ENCODE measurements at regions of chr6 and their contacts with region 1.

Region 1: DNA sequence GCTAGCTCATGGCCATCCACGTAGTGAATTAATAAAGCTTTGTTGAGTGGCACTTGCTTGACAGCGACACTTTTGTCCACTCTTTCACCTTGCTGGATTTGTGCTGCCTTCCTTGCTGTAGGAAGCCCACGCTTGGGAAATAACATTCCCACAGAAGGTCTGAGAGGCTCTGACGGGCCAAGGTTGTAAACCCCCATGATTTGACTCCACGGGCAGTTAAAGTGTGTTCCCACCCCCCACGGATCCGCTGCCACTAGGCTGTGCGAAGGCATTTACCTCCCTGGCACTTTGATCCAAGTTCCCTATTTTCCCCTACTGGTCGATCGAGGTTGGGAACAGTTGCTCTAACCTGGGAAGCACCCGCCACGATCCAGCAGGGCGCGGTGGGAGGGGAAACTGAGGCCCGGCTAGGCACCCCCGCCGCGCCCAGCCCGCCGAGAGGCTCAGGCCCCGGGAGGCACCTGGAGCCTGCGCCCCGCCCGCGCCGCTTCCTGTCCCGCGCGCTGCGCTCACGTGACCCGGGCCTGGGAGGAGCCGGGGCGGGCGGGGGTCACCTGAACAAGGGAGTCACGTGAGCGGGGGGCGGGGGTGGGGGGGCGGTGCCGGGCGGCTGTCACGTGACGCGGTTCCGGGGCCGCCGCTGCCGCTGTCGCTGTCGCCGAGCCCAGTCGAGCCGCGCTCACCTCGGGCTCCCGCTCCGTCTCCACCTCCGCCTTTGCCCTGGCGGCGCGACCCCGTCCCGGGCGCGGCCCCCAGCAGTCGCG is at the start of gene IGF2R:
- DNase-seq: peak; percentile 95 to 96
- ATAC-seq: peak; percentile 95
- H3K4me3 ChIP-seq: peak within 1 kb of the TSS; percentile 90 to 93
- H3K27ac ChIP-seq: peak within 1 kb of the TSS; percentile 37 to 66
- H3K4me1 ChIP-seq: peaks cover 0 to 4% of the 10 kb centered on the region in 2 donors
- H3K27me3 ChIP-seq: no peaks in the 10 kb centered on the region
- total RNA-seq, gene IGF2R: 76.8 to 82.0 TPM

Region 2: DNA sequence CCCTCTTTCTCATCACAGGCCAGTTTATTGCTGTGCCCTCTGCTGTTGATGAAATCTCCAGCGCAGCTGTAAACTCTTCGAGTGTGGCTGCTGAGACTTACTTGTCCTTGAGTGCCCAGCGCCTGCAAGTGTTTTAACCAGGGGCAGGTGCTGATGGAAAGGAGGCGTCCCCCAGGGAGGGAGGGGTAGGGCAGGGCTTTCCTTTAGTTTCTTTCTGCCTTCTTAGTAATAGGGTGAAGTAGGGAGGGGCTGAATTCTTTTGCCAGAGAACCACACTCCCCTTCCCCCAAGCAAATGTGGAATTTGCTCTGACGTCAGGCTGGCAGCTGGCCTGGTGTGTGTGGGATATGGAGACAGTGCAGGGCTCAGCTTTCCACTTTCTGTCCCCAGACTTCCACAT is 61.5 kb after region 1 on chr6:
- intact Hi-C with region 1: loop called in 1 of 2 experiments (anchors 5 kb)
- DNase-seq: peak; percentile 90 to 95
- ATAC-seq: peak; percentile 80
- H3K4me3 ChIP-seq: no peak overlapping the region
- H3K27ac ChIP-seq: peak overlapping the region in 1 of 2 donors; percentile 65
- H3K4me1 ChIP-seq: no peaks in the 10 kb centered on the region
- H3K27me3 ChIP-seq: no peaks in the 10 kb centered on the region